ENCODE measurements at regions of chr4 and their contacts with region 1.

Region 1: DNA sequence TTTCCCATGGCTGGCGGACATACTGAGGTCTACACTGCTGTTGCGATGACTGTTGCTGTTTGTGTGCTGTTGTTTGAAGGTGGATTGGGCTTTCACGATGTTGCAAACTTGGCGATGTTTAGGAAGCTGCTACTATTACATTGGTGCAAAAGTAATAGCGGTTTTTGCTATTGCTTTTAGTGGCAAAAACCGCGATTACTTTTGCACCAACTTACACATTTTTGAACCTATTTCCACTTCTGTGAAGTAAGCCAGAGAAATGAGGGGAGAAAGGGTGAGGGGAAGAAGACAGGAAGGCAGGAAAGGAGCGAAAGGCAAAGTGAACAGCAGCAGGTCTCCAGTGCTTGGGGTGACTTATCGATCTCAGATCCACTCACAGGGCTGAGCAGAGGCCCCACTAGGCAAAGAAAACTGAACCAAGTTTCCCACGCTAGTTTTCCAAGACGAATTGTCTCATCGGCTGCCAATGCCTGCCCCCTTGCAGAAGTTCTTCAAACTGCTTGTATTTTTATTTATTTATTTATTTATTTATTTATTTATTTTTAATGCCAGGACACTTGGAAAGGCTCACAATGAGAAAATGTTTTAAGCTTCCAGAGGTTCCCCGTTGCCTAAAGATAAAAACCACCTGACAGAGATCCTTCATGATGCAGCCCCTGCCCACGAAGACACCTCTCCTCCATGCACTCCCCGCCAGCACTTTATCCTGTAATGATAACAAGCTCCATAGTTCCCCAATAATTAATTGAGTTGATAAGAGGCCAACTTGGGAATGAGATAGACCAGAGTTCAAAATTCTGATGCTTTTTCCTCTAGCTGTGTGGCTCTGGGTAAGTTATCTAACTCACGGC is 43.3 kb downstream of the QDPR start:
- DNase-seq: no peak
- H3K4me3 ChIP-seq: no peak overlapping the region
- CTCF ChIP-seq: peak; percentile 51

Region 2: DNA sequence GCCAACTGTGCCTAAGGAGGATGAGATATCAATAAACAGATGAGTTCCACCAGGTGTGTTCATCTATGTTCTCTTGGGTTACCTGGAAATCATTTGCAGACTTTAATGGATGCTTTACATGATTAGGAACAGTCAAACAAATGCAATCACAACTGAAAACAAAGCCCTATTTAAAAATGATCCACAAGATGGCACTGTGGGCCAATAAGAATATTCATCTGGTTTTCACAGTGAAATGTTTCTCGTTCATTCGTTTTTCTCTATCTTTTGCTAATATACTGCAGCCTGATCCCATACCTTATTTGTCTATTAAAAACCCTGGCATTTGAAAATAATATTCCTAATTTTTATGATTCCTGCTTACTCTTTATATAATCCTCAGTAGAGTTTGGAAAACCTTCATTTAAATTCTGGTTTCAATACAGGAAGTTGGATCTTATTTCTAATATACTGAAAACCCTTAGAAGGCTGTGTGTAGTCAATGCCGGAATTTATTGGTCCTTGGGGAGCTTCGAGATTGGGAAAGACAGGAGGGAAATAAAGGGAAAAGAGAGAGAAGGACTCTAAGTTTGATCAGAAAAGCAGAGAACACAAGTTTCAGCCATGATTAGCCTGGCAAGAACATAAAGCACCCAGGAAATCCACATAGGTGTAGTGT is 1178.6 kb before region 1 on chr4:
- CTCF ChIA-PET with region 1: interaction called, 151 read pairs
- POLR2A ChIA-PET with region 1: no interaction called
- DNase-seq: peak; percentile 12
- H3K4me3 ChIP-seq: no peak overlapping the region
- CTCF ChIP-seq: peak; percentile 28

Region 3: DNA sequence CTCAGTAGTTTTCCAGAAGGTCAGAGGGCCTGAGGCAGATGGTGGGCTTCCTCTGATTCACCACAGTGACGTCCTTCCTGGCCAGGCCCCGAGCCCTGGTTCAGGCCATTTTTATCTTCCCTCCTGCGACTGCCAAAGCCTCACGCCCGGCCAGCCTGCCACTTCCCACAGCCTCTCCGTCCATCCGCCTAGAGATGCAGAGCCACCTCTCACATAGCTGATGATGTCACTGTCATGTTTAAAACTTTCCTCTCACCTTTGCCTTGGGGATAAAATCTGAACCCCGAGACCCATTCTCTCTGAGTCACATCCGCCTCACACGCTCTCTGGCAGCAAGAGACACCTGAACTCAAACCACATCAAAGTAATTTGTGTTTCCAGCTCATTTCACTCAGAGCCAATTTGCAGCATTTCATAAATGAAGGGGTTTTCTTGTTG is 132.1 kb before region 1 on chr4:
- CTCF ChIA-PET with region 1: interaction called, 20 read pairs
- POLR2A ChIA-PET with region 1: no interaction called
- DNase-seq: no peak
- H3K4me3 ChIP-seq: no peak overlapping the region
- CTCF ChIP-seq: no peak

Region 4: GRCh38 chr4:17356926-17357325 is 111.7 kb before region 1 on chr4:
- CTCF ChIA-PET with region 1: interaction called, 13 read pairs
- POLR2A ChIA-PET with region 1: no interaction called
- DNase-seq: no peak
- H3K4me3 ChIP-seq: no peak overlapping the region
- CTCF ChIP-seq: no peak

Region 5: DNA sequence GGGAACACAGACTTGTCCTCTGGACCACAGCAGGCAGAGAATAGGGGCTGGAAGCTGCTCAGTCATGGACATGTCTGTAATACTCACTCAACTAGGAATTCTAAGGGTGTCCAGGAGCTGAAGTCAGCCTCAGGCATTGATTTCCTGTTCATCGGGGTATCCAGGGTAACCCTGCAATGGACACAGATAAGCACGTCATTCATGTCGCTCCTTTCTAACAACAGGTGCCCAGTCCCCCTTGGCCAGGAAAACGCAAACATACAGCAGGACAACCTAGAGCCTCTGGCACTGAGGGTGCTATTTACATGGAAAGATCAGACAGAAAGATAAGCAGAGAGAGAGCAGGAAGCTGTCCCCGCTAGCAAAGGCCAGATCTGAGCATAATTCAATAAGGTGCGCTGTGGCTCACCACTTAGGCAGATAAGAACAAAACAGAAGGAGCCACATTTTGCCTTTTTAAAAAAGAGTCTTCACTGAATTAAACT is 22.0 kb after region 1 on chr4:
- CTCF ChIA-PET with region 1: interaction called, 12 read pairs
- POLR2A ChIA-PET with region 1: no interaction called
- DNase-seq: no peak
- H3K4me3 ChIP-seq: no peak overlapping the region
- CTCF ChIP-seq: no peak

Region 6: DNA sequence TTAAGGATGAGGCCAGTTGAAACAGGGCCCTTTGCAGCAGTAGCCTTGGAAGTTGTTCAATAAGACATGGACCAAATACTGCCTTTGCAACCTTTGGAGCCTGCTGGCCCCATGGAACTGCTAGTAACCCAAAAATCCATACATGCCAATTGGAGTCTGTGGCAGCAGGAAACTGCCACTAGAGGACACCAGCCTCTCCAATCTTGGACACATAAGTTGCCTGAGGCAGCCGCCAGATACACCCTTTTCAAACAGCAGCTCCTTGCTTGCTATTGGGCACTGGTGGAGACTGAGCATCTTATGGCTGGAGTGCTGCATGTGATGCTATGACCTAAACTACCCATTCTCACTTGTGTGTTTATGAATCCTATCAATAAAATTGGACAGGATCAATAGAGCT is 93.6 kb after region 1 on chr4:
- CTCF ChIA-PET with region 1: no interaction called
- POLR2A ChIA-PET with region 1: no interaction called
- DNase-seq: no peak
- H3K4me3 ChIP-seq: no peak overlapping the region
- CTCF ChIP-seq: no peak

Region 7: DNA sequence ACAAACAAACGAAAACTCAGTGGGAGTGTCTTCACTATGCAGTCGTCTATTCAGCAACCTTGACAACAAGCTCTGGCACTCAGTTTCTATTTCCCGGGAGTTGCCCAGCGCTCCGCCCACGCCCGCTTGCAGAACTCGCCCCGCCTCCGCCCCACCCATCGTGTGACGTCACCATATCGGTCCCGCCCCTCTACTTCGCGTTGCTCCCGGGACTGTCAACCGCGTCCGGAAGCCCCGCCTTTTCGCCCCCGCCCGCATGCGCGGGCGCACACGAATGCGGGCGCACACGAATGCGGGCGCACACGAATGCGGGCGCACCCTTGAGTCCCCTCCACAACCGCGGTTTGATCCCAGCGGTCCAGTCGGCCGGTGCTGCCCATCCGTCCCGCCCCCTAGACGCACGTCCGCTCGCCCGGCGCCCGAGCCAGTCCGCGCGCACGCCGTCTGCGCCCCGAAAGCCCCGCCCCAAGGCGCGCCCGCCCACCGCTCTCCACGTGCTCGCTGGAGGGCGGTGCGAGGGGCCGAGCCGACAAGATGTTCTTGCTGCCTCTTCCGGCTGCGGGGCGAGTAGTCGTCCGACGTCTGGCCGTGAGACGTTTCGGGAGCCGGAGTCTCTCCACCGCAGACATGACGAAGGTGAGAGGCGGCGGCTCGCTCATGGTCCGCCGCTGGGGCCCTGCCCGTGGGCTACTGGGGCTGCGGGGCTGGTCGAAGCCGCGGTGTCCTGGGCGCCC is 108.5 kb after region 1 on chr4 and contains the start of gene LAP3:
- CTCF ChIA-PET with region 1: no interaction called
- POLR2A ChIA-PET with region 1: no interaction called
- DNase-seq: peak; percentile 74
- H3K4me3 ChIP-seq: peak within 1 kb of the TSS; percentile 79
- CTCF ChIP-seq: no peak